Activated CD4-positive, alpha-beta T cell treated with anti-CD3 and anti-CD28 coated beads for 36 hours (primary cell): ENCODE measurements at regions of chr1 and their contacts with region 1.

Region 1: DNA sequence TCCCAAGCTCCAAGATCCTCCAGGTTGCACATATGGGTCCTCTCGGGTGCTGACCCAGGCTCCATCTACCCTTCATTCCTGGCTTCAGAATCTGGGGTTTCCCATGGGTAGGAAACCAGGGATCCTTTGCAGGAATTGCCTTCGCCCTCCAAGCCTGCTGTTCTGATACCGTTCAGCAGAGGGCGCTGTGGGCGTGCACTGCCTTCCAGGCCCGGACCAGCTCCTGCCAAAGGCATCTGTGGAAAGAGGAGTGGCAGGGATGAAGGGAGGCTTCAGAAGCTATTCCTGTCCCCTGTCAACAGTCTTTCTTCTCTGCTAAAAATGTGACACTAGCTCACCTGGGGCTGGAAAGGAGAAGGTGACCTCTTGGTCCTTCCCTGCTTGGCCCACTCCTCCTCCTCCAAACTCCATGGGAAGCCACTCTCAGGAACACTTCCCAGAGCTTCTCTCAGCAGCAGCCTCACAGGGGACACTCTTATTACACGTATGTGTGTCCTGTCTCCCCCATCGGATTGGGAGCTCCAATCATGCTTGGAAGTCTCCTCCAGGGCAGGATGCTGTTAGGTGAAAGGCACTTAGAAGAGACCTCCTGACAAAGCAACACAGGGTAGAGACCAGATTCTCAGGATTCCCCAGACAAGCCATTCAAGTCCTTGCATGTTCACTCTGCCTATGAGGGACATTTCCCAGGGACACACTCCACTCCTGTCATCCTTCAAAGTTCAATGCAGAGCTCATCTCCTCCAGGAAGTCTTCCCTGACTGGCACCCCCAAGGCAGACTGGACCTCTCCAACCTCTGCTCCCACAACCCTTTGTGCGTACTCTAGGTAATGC is 71.3 kb downstream of the VWA5B1 start:
- DNase-seq: peak; percentile 63
- ATAC-seq: no peak
- H3K4me3 Mint-ChIP-seq: no peak overlapping the region
- H3K27ac Mint-ChIP-seq: no peak overlapping the region
- H3K4me1 Mint-ChIP-seq: peaks cover 20% of the 10 kb centered on the region
- H3K27me3 Mint-ChIP-seq: peaks cover 72% of the 10 kb centered on the region

Region 2: DNA sequence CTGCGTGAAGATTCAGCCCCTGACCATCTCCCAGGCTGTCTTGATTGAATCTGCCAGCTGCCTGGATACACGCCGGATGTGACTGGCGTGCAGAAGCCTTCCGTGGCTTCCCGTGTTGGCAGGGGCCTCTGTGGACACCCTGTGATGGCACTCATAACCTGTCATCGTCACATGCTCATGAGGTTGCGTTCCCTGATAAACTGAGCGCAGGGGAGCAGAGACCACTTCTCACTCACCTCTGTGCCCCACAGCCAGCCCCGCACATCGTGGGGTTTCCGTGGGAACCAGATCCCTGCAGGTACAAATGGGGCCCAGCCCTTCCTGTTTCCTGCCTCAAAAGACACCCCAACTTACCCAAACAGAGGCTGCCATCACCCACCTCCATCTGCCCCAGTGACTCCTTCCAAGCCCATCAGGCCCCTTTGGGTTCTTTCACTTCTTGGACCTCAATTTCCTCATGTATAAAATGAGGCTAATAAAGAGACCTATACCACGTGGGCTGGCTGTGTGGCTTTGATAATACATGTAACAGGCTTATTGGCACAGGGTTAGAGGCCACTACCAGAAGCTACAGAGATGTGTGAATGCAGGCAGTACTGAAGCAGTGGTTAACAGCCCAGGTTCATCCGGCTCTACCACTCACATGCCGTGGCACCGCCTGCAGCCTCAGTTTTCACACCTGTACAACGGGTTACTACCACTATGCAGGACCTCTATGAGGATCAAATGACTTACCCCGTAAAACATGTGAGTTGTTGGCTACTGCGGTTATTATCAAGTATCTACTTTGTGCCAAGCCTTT is 673.8 kb before region 1 on chr1:
- CTCF ChIA-PET with region 1: no interaction called
- POLR2A ChIA-PET with region 1: no interaction called
- intact Hi-C with region 1: no loop called
- DNase-seq: peak; percentile 29
- ATAC-seq: peak; percentile 71
- H3K4me3 Mint-ChIP-seq: no peak overlapping the region
- H3K27ac Mint-ChIP-seq: peak overlapping the region; percentile 72
- H3K4me1 Mint-ChIP-seq: peaks cover 28% of the 10 kb centered on the region
- H3K27me3 Mint-ChIP-seq: no peaks in the 10 kb centered on the region

Region 3: GRCh38 chr1:20212685-20213331 is 149.2 kb before region 1 on chr1:
- CTCF ChIA-PET with region 1: interaction called, 4 read pairs
- POLR2A ChIA-PET with region 1: no interaction called
- intact Hi-C with region 1: loop called in 1 of 2 experiments (anchors 5 kb)
- DNase-seq: peak; percentile 74
- ATAC-seq: peak; percentile 61
- H3K4me3 Mint-ChIP-seq: no peak overlapping the region
- H3K27ac Mint-ChIP-seq: no peak overlapping the region
- H3K4me1 Mint-ChIP-seq: peaks cover 8% of the 10 kb centered on the region
- H3K27me3 Mint-ChIP-seq: peaks cover 46% of the 10 kb centered on the region

Region 4: GRCh38 chr1:20279509-20279908 is 82.5 kb before region 1 on chr1:
- CTCF ChIA-PET with region 1: no interaction called
- POLR2A ChIA-PET with region 1: no interaction called
- intact Hi-C with region 1: no loop called
- DNase-seq: no peak
- ATAC-seq: no peak
- H3K4me3 Mint-ChIP-seq: no peak overlapping the region
- H3K27ac Mint-ChIP-seq: no peak overlapping the region
- H3K4me1 Mint-ChIP-seq: no peaks in the 10 kb centered on the region
- H3K27me3 Mint-ChIP-seq: peaks cover 21% of the 10 kb centered on the region

Region 5: DNA sequence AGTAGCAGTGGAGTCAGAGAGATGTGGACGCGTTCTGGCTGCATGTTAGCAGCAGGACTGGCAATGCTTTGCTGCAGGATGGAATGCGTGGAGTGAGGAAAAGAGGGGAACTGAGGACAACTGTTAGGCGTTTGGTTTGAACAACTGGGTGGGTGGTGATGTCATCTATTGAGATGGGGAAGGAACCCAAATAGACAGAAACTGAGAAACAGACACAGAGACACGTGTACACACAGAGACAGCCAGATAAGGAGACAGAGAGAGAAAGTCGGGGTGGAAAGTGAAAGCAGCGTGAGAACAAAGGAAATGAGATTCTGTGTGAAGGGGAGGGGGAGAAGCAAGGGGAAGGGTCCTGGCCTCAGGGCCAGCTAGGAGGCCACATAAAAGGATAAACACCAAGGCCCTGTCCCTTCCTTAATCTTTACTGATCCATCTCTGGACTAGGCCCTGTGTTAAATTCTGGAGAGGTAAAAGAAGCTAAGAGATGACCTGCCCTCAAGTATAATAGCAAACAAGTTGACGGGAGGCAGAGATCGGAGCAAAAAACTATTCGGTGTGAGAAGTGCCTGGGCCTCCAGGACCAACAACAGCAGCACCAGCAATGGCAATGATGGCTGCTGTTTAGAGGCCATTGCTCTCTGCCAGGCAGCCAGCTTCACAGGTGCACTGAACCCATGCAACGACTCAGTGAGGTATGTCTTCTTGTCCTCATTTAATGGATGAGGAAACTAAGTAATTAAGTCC is 39.8 kb before region 1 on chr1:
- CTCF ChIA-PET with region 1: no interaction called
- POLR2A ChIA-PET with region 1: no interaction called
- intact Hi-C with region 1: loop called in 1 of 2 experiments (anchors 1 kb)
- DNase-seq: peak; percentile 55
- ATAC-seq: peak; percentile 82
- H3K4me3 Mint-ChIP-seq: peak overlapping the region; percentile 7
- H3K27ac Mint-ChIP-seq: peak overlapping the region; percentile 20
- H3K4me1 Mint-ChIP-seq: peaks cover 31% of the 10 kb centered on the region
- H3K27me3 Mint-ChIP-seq: peaks cover 19% of the 10 kb centered on the region